Right lobe of liver (tissue), 6 donors: ENCODE measurements at regions of chr5 and their contacts with region 1.

Region 1: GRCh38 chr5:36241631-36242533 is at the start of gene NADK2:
- DNase-seq: peak; percentile 96 to 98 (median 98)
- ATAC-seq: peak; percentile 77 to 89 (median 80)
- H3K4me3 ChIP-seq: peak within 1 kb of the TSS; percentile 77 to 83 (median 78)
- H3K27ac ChIP-seq: peak within 1 kb of the TSS; percentile 98 to 99 (median 99)
- H3K4me1 ChIP-seq: peaks cover 0 to 37% (median 7%) of the 10 kb centered on the region in 4 donors
- H3K27me3 ChIP-seq: no peaks in the 10 kb centered on the region
- CTCF ChIP-seq: peak; percentile 73 to 91 (median 77)
- POLR2A ChIP-seq: peak; percentile 93
- total RNA-seq, gene NADK2: 102 to 253 (median 142) TPM

Region 2: DNA sequence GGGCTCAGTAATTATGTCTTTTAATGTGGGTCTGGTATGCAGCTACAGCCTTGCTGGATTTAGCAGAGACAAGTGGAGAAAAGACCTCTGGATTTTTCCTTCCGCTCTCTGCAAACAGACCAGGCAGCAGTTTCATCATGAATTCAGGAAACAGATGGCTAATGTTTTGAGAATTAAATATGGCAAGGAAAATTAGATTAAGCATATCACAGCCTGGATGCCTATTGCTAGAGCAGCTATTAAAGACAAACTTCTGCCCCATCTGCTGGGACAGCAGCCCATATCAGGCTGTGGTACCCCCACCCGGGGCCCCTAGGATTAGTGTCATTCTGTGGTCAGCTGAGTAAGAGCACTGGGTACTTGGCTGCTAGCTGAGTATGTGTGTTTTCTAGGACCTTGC is 83.7 kb before region 1 on chr5:
- intact Hi-C with region 1: no loop called
- DNase-seq: no peak
- ATAC-seq: no peak
- H3K4me3 ChIP-seq: no peak overlapping the region
- H3K27ac ChIP-seq: no peak overlapping the region
- H3K4me1 ChIP-seq: peaks cover 0 to 42% (median 16%) of the 10 kb centered on the region in 4 donors
- H3K27me3 ChIP-seq: no peaks in the 10 kb centered on the region
- CTCF ChIP-seq: no peak
- POLR2A ChIP-seq: no peak

Region 3: DNA sequence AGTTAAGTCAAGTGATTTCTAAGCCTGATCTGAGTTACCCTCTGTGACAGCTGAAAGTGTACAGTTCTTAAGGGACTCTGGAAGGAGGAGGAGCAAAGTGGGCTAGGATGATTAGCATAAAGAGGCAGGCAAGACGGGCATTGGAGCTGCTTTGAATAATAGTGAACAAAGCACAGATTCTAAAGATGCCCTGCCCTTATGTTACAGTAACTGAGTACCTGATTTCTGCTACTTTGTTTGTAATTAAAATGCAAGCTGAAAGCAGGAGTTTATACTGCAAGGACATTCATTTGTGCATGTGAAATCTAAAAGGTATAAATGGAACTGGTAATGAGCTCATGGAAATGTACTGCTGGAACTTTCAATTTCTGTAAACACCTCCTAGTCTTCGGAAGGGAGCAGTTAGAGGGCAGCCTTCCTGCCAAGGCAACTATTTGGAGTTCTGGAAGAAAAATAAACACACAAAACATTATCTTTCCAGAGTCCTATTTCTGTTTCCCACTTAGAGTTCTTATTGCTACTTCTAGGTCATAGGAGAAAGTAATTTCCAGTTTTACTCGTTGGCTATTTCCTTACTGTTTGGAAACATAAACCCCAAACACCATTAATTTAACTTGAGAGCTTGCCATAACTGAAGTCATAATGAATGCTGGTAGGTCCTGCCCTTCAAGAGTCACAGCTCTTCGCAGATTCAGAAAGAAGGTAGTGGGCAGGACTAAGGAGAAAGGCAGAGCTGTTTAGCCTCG is 60.1 kb after region 1 on chr5 and contains the start of gene RANBP3L:
- intact Hi-C with region 1: loop called in 1 of 2 experiments (anchors 5 kb)
- DNase-seq: peak in 2 of 3 donors; percentile 56 to 57
- ATAC-seq: peak; percentile 71 to 83 (median 72)
- H3K4me3 ChIP-seq: peak within 1 kb of the TSS; percentile 12 to 36 (median 31)
- H3K27ac ChIP-seq: peak within 1 kb of the TSS; percentile 63 to 85 (median 81)
- H3K4me1 ChIP-seq: peaks cover 0 to 47% (median 6%) of the 10 kb centered on the region in 4 donors
- H3K27me3 ChIP-seq: no peaks in the 10 kb centered on the region
- CTCF ChIP-seq: no peak
- POLR2A ChIP-seq: no peak
- total RNA-seq, gene RANBP3L: 0.22 to 5.0 (median 1.3) TPM